ENCODE measurements at regions of chr7 and their contacts with region 1.

Region 1: DNA sequence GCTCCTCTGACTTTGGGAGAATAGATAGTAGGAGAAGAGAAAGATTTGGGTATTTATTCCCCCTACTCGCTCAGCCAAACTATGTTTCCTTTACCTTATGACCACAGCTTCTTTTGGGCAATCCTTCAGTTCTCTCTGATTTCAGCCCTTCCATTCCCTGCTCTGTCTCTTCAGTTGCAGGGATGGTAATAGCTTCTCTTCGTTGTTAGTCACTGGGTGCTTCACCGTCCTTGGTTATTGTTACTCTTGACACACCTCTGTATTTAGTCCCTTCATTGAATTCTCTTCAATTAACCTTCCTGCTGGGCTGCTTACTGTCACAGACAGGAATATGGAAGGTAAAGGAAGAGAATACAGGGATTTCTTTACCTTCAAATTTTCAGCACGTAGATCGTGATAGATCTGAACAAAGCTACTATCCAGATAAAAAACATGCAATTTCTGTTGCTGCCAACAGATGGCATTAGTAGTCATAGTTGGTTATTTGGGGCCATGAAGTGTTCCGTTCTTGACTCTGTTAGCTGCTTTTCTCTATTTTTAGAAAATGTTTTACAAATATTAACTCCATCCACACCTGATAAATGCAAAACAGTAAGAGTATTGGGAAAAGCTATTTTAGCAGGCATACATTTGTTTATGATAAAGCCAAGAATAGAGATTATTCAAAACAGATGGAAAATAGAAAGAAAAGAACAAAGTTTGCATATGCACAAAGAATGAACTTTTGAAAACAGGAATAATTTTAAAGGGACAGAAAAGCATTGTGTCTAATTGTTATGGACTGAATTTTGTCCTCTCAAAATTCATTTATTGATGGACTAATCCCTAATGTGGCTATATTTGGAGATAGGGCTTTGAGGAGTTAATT is 14.0 kb upstream of the PTTG1IP2 start:
- DNase-seq: no peak
- ATAC-seq: peak; percentile 74 to 78
- H3K4me3 ChIP-seq: peak overlapping the region; percentile 12 to 30 (median 25)
- H3K27ac ChIP-seq: no peak overlapping the region
- H3K4me1 ChIP-seq: peaks cover 0 to 3% of the 10 kb centered on the region in 2 donors
- H3K27me3 ChIP-seq: no peaks in the 10 kb centered on the region
- CTCF ChIP-seq: peak in 4 of 5 experiments; percentile 45 to 67 (median 57)
- POLR2A ChIP-seq: no peak

Region 2: GRCh38 chr7:90595801-90596671 is 140.6 kb after region 1 on chr7 and contains the start of gene CDK14:
- in situ Hi-C with region 1: no loop called
- intact Hi-C with region 1: loop called (anchors 5 kb)
- DNase-seq: peak; percentile 68 to 69
- ATAC-seq: peak; percentile 75 to 83
- H3K4me3 ChIP-seq: peak within 1 kb of the TSS; percentile 72 to 92 (median 78)
- H3K27ac ChIP-seq: peak within 1 kb of the TSS; percentile 66 to 86 (median 76)
- H3K4me1 ChIP-seq: peaks cover 10 to 40% of the 10 kb centered on the region in 2 donors
- H3K27me3 ChIP-seq: no peaks in the 10 kb centered on the region
- CTCF ChIP-seq: peak; percentile 31 to 66 (median 63)
- POLR2A ChIP-seq: peak; percentile 31 to 32
- total RNA-seq, gene CDK14: 3.9 to 8.6 (median 7.3) TPM

Region 3: GRCh38 chr7:90629297-90629918 is 174.0 kb after region 1 on chr7:
- in situ Hi-C with region 1: loop called in 1 of 4 experiments (anchors 25 kb)
- intact Hi-C with region 1: loop called (anchors 10 kb)
- DNase-seq: no peak
- ATAC-seq: peak; percentile 81 to 90
- H3K4me3 ChIP-seq: no peak overlapping the region
- H3K27ac ChIP-seq: no peak overlapping the region
- H3K4me1 ChIP-seq: peaks cover 2 to 6% of the 10 kb centered on the region in 2 donors
- H3K27me3 ChIP-seq: no peaks in the 10 kb centered on the region
- CTCF ChIP-seq: peak; percentile 34 to 63 (median 46)
- POLR2A ChIP-seq: no peak

Region 4: DNA sequence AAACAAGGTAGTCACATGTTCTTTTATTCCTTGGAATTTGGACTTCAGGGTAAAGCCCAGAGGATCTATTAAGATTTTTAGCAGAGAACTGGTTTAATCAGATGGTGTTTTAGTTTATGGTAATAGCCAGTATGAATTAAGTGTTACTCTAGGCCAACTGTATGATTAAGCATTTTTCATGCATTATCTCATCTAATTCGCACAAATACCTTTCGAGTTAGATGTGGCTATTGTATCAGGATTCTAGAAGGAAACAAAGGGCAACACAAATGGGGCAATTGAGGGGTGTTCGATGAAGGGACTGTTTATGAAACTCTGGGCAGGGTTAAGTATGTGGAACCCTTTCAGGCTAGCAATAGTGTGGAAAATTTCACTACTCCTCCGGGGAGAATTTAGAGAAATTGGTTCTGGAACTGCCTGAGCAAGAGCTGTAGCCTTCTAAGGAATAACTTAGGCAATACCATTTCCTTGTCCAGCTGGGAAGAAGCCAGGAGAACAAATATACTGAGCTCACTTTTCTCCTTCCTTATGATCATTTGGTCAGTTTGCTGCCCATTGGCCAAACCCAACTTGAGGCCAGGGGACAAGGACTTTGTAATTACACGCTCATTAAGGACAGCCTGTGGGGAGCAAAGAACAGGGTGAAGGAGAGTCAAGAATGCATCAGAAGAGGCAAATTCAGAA is 489.8 kb after region 1 on chr7:
- in situ Hi-C with region 1: no loop called
- intact Hi-C with region 1: no loop called
- DNase-seq: no peak
- ATAC-seq: peak; percentile 45 to 55
- H3K4me3 ChIP-seq: no peak overlapping the region
- H3K27ac ChIP-seq: no peak overlapping the region
- H3K4me1 ChIP-seq: peaks cover 0 to 3% of the 10 kb centered on the region in 2 donors
- H3K27me3 ChIP-seq: no peaks in the 10 kb centered on the region
- CTCF ChIP-seq: no peak
- POLR2A ChIP-seq: no peak

Region 5: GRCh38 chr7:91020636-91021385 is 565.4 kb after region 1 on chr7:
- in situ Hi-C with region 1: loop called in 3 of 4 experiments (anchors 10 to 25 kb)
- intact Hi-C with region 1: no loop called
- DNase-seq: peak in 1 of 2 donors; percentile 18
- ATAC-seq: peak; percentile 50 to 55
- H3K4me3 ChIP-seq: no peak overlapping the region
- H3K27ac ChIP-seq: no peak overlapping the region
- H3K4me1 ChIP-seq: no peaks in the 10 kb centered on the region
- H3K27me3 ChIP-seq: no peaks in the 10 kb centered on the region
- CTCF ChIP-seq: no peak
- POLR2A ChIP-seq: no peak

Region 6: GRCh38 chr7:91034459-91035368 is 579.3 kb after region 1 on chr7:
- in situ Hi-C with region 1: loop called in 3 of 4 experiments (anchors 10 to 25 kb)
- intact Hi-C with region 1: loop called (anchors 2 kb)
- DNase-seq: peak; percentile 13 to 34
- ATAC-seq: peak; percentile 60 to 70
- H3K4me3 ChIP-seq: no peak overlapping the region
- H3K27ac ChIP-seq: no peak overlapping the region
- H3K4me1 ChIP-seq: no peaks in the 10 kb centered on the region
- H3K27me3 ChIP-seq: no peaks in the 10 kb centered on the region
- CTCF ChIP-seq: peak; percentile 49 to 69 (median 58)
- POLR2A ChIP-seq: no peak

Region 7: DNA sequence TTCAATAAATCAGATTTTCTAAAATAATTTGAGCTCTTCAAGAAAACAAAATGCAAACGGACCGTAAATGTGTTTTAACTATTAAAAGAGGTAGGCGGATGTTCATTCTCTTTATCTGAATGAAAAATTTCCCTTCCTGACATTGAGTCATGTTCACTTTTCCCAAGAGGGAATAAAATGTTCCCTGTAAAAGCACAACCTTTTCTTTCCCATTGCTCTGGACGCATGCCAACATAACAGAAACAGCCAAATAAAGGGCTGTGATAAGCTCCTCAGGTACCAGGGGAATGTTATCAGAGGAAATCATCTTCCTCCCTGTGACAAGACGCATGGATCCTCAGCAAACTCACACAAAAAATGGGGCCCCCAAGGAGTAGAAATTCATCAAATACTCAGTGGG is 1173.3 kb after region 1 on chr7:
- in situ Hi-C with region 1: loop called in 1 of 4 experiments (anchors 10 kb)
- intact Hi-C with region 1: no loop called
- DNase-seq: no peak
- ATAC-seq: peak in 1 of 2 donors; percentile 52
- H3K4me3 ChIP-seq: no peak overlapping the region
- H3K27ac ChIP-seq: no peak overlapping the region
- H3K4me1 ChIP-seq: no peaks in the 10 kb centered on the region
- H3K27me3 ChIP-seq: no peaks in the 10 kb centered on the region
- CTCF ChIP-seq: no peak
- POLR2A ChIP-seq: no peak